Prostate gland (tissue), 2 donors: ENCODE measurements at regions of chr7 and their contacts with region 1.

Region 1: DNA sequence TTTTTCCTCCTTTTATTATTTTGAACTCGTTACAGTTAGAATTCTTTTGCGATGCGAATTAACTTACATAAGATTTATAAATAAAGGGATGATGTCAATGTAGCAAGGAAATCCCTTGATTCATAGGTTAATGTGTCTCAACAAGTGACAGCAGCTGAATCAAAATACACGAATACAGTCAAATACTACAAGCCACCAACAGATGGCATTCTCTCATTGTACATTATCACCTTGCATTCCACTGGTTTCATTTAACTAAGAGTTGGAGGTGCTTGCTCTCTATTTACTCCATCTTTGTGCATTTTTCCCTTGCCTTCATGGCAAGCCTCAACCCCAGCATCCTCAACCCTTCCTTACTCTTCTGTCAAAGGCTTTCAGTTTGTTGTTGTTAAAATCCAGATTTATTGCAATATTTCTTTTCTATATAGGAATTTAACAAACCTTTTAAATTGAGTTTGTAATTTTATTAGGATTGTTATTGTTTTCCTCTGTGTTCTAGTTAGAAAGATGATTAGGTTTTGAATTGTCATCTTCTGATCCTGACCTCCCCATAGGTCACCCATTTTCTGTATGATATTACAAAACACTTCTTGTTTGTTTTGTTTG is 78.3 kb downstream of the SLC25A40 start:
- DNase-seq: peak; percentile 16
- H3K4me3 ChIP-seq: no peak overlapping the region
- H3K27ac ChIP-seq: no peak overlapping the region
- H3K4me1 ChIP-seq: no peaks in the 10 kb centered on the region
- H3K27me3 ChIP-seq: no peaks in the 10 kb centered on the region
- CTCF ChIP-seq: peak; percentile 18 to 76 (median 62)
- POLR2A ChIP-seq: no peak

Region 2: DNA sequence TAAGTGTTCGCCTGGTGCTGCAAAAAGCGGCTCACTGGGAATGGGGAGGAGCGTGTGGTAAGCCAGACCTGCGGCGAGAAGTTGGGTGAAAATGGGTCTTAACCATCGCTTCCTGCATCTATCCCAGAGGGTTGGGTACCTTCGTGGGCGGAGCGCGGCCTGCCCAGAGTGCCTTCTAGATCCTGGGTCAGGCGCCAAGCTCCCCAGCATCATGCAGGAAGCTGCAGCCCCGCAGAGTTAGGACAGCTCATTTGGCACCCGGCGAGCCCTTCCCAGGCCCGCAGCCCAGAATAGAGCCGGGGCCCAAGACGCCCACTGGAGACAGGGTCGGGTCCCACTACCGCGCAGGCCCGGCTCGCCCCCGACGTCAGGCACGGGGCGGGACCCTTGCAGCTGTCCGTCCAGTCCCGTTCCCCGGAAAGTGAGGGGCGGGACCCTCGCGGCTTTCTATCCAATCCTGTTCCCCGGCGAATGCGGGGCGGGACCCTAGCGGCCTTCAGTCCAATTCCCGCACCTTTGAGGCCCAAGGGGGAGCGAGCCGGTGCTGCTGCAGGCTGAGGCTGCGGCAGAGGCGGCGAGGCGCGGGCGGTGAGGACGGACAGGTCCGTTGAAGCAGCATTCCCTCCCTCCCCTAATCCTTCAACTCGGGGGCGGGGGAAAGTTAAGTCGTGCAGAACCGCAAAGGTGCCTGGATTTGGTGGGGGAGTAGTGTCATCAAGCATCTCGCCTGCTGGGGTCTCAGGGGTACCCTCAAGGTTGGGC is 452.6 kb before region 1 on chr7 and contains the start of gene CROT:
- intact Hi-C with region 1: no loop called
- DNase-seq: peak; percentile 97
- H3K4me3 ChIP-seq: peak within 1 kb of the TSS; percentile 46 to 64
- H3K27ac ChIP-seq: peak within 1 kb of the TSS; percentile 86 to 88
- H3K4me1 ChIP-seq: peaks cover 6% of the 10 kb centered on the region
- H3K27me3 ChIP-seq: no peaks in the 10 kb centered on the region
- CTCF ChIP-seq: peak in 3 of 4 experiments; percentile 14 to 51 (median 34)
- POLR2A ChIP-seq: peak; percentile 86
- total RNA-seq, gene CROT: 17.0 to 35.0 TPM

Region 3: DNA sequence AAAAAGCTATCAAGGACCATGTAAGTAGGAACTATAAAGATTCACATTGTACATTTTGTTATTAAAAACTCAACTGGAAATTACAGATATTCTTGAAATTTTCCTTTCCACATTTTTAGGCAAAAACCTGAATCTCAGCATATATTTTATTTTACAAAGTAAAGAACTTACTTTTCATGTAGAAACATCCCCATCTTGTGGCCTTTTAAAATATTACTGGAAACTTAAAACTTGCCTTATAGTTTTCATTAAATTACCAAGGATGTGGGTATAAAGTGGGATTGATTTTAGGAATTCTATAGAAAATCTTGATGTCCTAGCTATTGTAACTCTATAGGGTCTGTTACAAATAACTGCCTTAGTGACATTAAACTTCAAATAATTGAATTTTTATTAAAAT is 89.0 kb after region 1 on chr7:
- intact Hi-C with region 1: loop called (anchors 5 kb)
- DNase-seq: no peak
- H3K4me3 ChIP-seq: no peak overlapping the region
- H3K27ac ChIP-seq: no peak overlapping the region
- H3K4me1 ChIP-seq: no peaks in the 10 kb centered on the region
- H3K27me3 ChIP-seq: no peaks in the 10 kb centered on the region
- CTCF ChIP-seq: peak in 3 of 4 experiments; percentile 48 to 51 (median 50)
- POLR2A ChIP-seq: no peak

Region 4: DNA sequence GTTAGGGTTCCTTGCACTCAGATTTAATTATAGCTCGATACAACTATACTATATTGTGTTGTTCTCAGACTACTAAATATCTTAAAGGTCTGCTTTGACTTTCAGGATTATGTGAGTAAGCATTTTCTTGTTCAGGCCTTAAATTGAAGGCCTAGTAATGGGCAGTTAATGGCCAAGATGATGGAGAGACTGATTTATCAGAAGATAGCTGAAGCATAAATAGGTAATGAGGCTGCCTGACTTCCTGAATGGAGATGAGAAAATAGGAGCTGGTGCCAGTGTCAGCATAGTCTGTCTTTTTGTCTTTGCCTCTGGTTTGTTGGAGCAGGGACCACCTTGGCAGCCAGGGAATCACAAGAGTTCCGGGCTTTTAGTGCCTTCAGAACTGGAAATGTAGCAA is 168.4 kb after region 1 on chr7:
- intact Hi-C with region 1: no loop called
- DNase-seq: no peak
- H3K4me3 ChIP-seq: no peak overlapping the region
- H3K27ac ChIP-seq: no peak overlapping the region
- H3K4me1 ChIP-seq: no peaks in the 10 kb centered on the region
- H3K27me3 ChIP-seq: no peaks in the 10 kb centered on the region
- CTCF ChIP-seq: no peak
- POLR2A ChIP-seq: no peak

Region 5: DNA sequence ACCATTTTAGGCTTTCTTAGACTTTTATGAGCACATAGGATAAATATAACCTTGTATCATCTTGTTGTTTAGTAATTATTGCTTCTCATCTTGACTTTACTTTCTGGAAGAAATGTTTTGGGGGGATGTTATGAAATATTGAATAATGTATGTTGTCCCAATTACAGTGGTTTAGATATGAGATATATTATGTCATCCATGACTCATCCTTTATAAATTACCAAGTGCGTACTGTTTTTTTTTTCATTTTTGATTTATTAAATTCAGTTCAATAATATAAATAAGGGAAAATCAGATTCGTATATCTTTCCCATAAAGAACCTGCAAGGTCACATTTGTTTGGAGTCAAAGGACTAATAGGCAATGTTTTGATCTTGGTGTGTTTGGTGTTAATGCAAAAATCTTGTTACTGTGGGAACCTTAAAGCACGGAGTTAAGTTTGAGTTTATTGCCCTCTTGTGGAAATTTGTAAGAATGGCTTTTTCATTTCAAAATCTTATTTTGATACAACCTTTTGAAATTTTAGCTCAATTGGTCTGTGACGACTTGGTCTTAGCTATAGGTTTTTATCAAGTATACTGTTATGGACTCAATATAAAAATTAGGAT is 313.3 kb after region 1 on chr7:
- intact Hi-C with region 1: loop called (anchors 10 kb)
- DNase-seq: no peak
- H3K4me3 ChIP-seq: no peak overlapping the region
- H3K27ac ChIP-seq: peak overlapping the region in 1 of 2 donors; percentile 6
- H3K4me1 ChIP-seq: no peaks in the 10 kb centered on the region
- H3K27me3 ChIP-seq: no peaks in the 10 kb centered on the region
- CTCF ChIP-seq: peak in 3 of 4 experiments; percentile 42 to 64 (median 59)
- POLR2A ChIP-seq: no peak

Region 6: DNA sequence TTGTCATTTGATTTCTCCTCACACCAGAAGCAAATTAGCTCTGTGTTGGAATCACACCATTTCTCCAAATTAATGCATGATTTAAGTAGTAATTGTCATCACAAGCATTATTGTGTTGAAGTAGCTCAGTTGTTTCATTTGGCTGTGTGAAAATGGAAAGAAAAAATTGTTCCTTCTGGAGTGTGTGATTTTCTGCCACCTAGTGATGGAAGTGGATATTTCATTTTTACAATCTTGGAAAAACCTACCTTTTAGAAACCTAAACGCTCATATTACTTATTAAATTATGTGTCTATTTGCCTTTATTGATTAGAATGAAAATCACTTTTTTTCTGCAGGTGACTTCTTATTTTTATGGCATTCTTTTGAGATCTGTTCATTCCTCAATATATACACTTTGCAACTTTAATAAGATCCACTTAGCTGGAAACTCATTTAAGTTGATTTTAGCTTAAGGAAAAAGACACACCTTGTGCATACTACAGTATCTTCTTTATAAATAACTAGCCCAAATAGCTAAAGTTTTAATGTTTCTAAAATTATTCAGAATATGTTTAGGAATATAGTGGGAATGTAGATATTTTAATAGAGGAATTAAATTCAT is 371.9 kb after region 1 on chr7:
- intact Hi-C with region 1: loop called (anchors 2 kb)
- DNase-seq: no peak
- H3K4me3 ChIP-seq: no peak overlapping the region
- H3K27ac ChIP-seq: no peak overlapping the region
- H3K4me1 ChIP-seq: no peaks in the 10 kb centered on the region
- H3K27me3 ChIP-seq: no peaks in the 10 kb centered on the region
- CTCF ChIP-seq: peak in 3 of 4 experiments; percentile 38 to 71 (median 56)
- POLR2A ChIP-seq: no peak

Region 7: GRCh38 chr7:88254716-88255115 is 456.8 kb after region 1 on chr7:
- intact Hi-C with region 1: no loop called
- DNase-seq: no peak
- H3K4me3 ChIP-seq: no peak overlapping the region
- H3K27ac ChIP-seq: no peak overlapping the region
- H3K4me1 ChIP-seq: no peaks in the 10 kb centered on the region
- H3K27me3 ChIP-seq: no peaks in the 10 kb centered on the region
- CTCF ChIP-seq: no peak
- POLR2A ChIP-seq: no peak